BJ (cell line): ENCODE measurements at regions of chr2 and their contacts with region 1.

Region 1: DNA sequence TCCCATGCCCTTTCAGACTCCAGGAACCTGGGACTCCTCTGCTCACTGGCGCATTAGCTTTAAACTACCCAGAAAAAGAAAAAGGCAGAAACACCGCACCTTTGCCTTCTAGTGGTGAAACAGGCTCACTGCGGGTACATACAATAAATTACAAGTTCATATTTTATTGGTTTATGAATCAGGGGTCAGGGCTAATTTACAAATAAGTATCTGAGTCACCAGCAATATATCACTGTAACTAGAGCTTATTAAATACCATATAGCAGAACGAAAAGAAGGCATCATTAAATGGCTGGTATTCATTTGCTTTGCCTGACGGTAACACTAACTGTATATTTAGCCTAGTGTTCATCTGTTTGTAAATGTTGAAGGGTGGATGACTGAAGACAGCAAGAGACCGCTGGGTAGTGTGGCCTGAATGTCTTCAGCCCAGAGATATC is 26.9 kb upstream of the DTNB start:
- DNase-seq: peak; percentile 19
- H3K4me3 ChIP-seq: no peak overlapping the region
- H3K27me3 ChIP-seq: peaks cover 5% of the 10 kb centered on the region; the same call in 1 of the 2 replicates
- CTCF ChIP-seq: peak; percentile 80

Region 2: DNA sequence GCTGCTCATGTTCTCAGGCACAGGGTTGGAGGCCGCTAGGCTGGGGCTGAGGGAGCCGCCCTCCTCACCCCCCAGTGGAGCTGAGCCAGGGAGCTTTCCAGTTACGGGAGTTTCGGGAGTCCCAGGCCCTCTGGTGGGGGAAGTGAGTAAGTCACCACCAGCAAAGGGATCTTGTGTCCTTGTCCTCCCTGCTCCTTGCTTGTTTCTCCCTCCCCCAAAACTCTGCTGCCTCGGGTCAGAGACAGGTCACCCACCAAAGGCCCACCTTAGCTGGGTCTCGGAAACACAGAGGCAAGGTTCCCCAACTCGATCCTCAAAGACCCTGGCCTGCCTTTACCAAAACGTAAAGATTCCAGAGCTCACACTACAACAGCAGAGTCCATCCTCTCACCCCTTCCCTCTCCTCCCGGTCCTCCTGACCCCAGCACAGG is 471.4 kb before region 1 on chr2:
- CTCF ChIA-PET with region 1: no interaction called
- POLR2A ChIA-PET with region 1: no interaction called
- DNase-seq: no peak
- H3K4me3 ChIP-seq: no peak overlapping the region
- H3K27me3 ChIP-seq: 0 out of 2 replicates have a peak, but pooled peaks cover 1% of the 10 kb centered on the region
- CTCF ChIP-seq: peak; percentile 88

Region 3: DNA sequence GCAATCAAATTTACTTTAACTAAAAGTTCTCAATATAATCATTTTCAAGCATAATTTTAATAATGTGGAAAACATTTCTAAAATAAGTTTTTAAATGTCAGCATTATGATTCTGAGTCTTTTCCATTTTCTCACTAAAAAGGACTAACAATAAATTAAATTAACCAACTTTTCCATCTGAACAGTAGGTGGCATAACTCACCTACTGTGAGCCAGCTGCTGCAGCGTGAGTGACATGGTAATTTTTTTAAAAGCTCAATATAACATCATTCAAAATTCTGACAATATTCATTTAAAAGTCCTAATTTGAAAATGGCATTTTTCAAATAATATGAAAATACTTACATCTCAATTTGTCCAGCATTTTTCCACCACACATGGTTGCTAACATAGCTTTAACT is 93.3 kb before region 1 on chr2:
- CTCF ChIA-PET with region 1: interaction called, 58 read pairs
- POLR2A ChIA-PET with region 1: no interaction called
- DNase-seq: no peak
- H3K4me3 ChIP-seq: no peak overlapping the region
- H3K27me3 ChIP-seq: no peaks in the 10 kb centered on the region
- CTCF ChIP-seq: peak; percentile 49

Region 4: DNA sequence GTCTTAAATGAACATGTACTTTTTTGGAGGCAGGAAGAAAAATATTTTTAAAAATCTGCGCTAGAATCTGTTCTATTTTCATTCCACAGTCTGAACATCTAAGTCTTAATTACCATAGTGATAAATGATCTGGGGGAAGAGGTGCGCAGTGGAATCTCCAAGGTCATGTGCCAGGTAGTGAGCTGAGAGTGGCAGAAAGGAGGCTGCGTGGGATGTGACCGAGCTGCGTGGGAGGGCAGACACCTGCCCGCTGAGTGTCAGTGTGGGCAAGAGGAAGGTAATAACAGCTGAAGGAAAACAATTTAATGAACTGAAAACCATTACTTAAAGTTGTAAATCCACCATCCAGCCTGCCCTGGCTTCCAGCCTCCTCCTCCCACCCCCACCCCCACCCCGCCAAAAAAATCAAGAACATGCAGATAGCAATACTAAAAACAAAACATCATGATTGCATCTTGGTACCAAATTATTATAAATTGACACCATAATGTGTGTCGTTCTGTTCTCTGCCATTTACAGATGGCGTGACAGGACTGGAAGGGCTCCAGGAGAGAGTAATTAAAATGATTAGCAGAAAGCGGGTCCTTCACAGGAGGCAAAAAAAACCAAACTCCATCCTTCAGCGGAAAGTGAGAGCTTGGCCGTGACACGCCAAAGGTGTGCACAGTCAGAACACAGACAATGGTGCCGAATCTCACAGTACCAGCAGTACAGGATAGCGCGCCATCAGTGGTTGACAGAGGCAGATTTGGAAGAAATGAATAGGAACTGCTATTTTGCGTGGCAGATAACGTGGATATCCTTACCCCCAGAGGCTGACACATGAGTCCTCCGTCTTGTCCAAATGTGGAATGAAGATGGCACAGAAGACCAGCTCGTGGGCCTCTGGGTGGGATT is 15.4 kb before region 1 on chr2:
- CTCF ChIA-PET with region 1: interaction called, 29 read pairs
- POLR2A ChIA-PET with region 1: no interaction called
- DNase-seq: no peak
- H3K4me3 ChIP-seq: no peak overlapping the region
- H3K27me3 ChIP-seq: no peaks in the 10 kb centered on the region
- CTCF ChIP-seq: no peak

Region 5: GRCh38 chr2:25711675-25712354 is 11.6 kb after region 1 on chr2:
- CTCF ChIA-PET with region 1: interaction called, 51 read pairs
- POLR2A ChIA-PET with region 1: no interaction called
- DNase-seq: no peak
- H3K4me3 ChIP-seq: no peak overlapping the region
- H3K27me3 ChIP-seq: no peaks in the 10 kb centered on the region
- CTCF ChIP-seq: no peak

Region 6: DNA sequence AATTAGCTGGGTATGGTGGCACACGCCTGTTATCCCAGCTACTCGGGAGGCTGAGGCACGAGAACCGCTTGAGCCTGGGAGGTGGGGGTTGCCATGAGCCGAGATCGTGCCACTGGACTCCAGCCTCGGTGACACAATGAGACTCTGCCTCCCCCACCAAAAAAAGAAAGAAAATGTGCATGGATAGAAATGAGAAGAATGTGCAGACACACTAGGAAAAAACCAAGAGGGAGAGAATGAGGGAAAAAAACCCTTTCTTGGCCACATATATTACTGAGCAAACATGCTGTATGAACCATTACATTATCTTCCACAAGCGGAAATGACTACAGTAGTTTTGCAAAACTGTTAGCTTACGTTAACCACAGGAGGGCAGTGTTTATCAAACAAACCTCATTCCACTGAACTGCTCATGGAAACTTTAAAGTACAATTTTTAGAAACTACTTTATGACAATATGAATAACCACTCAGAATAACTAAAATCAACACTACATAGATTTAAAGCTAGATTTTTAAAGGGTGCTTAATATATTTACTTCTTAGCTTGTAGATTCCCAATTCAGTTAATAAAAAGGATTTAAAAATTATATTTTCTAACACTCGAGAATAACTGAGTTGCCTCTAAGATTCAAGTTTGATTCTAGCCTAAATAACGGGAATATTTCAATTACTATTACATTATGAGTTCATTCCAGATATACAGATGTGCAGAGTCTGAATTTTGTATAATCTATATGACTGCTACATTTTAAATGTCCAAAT is 151.7 kb after region 1 on chr2:
- CTCF ChIA-PET with region 1: no interaction called
- POLR2A ChIA-PET with region 1: no interaction called
- DNase-seq: peak; percentile 55
- H3K4me3 ChIP-seq: no peak overlapping the region
- H3K27me3 ChIP-seq: no peaks in the 10 kb centered on the region
- CTCF ChIP-seq: peak; percentile 61

Region 7: DNA sequence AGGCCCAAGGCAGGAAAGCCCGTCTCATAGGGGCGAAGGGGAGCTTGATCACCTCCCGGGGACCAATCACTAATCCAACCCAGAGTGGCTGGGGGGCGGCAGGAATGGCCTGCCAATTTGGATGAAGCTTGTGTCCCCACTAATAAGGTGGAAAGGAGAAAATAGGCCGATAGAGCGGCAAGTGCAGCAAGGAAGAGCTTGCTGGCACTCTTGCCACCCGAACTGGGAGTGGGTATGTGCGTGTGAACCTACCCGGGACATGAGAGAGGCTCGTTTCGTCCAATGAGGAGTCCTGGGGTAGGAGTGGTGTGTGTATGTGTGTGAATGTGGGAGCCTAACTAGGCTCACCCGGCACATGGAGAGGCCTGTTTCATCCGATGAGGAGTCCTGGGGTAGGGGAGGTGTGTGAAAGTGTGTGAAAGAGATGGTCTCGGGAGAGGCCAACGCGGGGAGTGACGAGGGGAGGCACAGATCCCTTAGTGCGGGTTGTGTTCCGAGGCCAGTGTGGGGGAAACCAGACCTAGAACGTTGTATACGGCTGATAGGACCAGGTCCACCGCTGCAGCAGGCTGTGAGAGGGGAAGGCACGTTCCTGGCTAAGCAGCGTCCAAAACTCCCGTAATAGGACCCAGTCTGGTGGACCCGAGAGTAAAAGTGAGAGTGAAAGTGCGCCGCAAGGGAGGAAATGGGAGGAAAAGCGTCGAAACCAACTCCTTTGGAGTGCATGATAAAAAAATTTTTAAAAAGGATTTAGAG is 598.6 kb after region 1 on chr2:
- CTCF ChIA-PET with region 1: no interaction called
- POLR2A ChIA-PET with region 1: interaction called, 10 read pairs
- DNase-seq: no peak
- H3K4me3 ChIP-seq: peak overlapping the region; percentile 36
- H3K27me3 ChIP-seq: no peaks in the 10 kb centered on the region
- CTCF ChIP-seq: no peak